ENCODE measurements at regions of chr1 and their contacts with region 1.

Region 1: GRCh38 chr1:182084487-182085316 is 23.2 kb upstream of the ZNF648 start:
- DNase-seq: peak; percentile 72 to 76 (median 74)
- H3K4me3 ChIP-seq: no peak overlapping the region
- H3K4me3 Mint-ChIP-seq: peak overlapping the region in 4 of 8 donors; percentile 13 to 58 (median 16)
- H3K27ac ChIP-seq: peak overlapping the region; percentile 21
- H3K27ac Mint-ChIP-seq: peak overlapping the region; percentile 59 to 90 (median 79)
- H3K4me1 ChIP-seq: peaks cover 51% of the 10 kb centered on the region
- H3K4me1 Mint-ChIP-seq: peaks cover 30 to 51% (median 46%) of the 10 kb centered on the region in 4 donors
- H3K27me3 ChIP-seq: no peaks in the 10 kb centered on the region
- H3K27me3 Mint-ChIP-seq: no peaks in the 10 kb centered on the region

Region 2: DNA sequence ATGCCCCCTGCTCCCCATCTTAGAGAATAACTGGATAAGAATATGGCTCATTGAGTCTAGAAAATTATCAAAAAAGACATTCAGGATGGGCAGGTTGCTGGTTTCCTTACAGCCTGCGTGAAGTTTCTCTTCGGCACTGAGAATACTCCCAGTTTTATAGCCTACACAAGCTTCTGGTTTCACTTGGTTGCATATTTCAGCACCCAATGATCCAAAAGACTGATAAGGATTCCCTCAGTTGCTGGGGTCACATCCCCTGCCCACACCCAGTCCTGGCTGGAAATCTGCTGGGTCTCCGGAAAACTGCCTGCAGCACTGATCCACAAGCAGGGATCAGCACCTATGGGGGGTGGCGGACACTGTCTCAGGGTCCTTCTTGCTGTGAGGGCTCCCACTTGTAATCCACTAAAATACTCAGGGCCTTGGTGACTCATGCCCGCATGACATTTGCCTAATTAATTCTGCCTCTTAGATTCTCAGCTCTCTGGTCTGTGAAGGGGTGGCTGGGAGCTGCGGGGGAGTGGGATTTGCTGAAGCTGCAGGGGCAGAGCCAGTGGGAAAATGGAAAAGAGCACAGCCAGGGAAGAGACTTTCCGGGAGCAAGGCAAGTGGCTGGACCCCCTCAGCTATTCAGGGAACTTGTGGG is 165.7 kb before region 1 on chr1:
- CTCF ChIA-PET with region 1: no interaction called
- POLR2A ChIA-PET with region 1: no interaction called
- intact Hi-C with region 1: no loop called
- DNase-seq: no peak
- H3K4me3 ChIP-seq: no peak overlapping the region
- H3K4me3 Mint-ChIP-seq: no peak overlapping the region
- H3K27ac ChIP-seq: no peak overlapping the region
- H3K27ac Mint-ChIP-seq: no peak overlapping the region
- H3K4me1 ChIP-seq: no peaks in the 10 kb centered on the region
- H3K4me1 Mint-ChIP-seq: no peaks in the 10 kb centered on the region
- H3K27me3 ChIP-seq: no peaks in the 10 kb centered on the region
- H3K27me3 Mint-ChIP-seq: peaks cover 4 to 14% of the 10 kb centered on the region in 2 donors

Region 3: GRCh38 chr1:182029379-182030331 is 55.0 kb before region 1 on chr1:
- CTCF ChIA-PET with region 1: interaction called, 4 read pairs
- POLR2A ChIA-PET with region 1: no interaction called
- intact Hi-C with region 1: loop called (anchors 5 kb)
- DNase-seq: peak; percentile 98
- H3K4me3 ChIP-seq: peak overlapping the region; percentile 92 to 94
- H3K4me3 Mint-ChIP-seq: peak overlapping the region; percentile 91 to 100 (median 96)
- H3K27ac ChIP-seq: peak overlapping the region; percentile 77
- H3K27ac Mint-ChIP-seq: peak overlapping the region; percentile 84 to 100 (median 99)
- H3K4me1 ChIP-seq: peaks cover 16% of the 10 kb centered on the region
- H3K4me1 Mint-ChIP-seq: peaks cover 14 to 21% (median 16%) of the 10 kb centered on the region in 4 donors
- H3K27me3 ChIP-seq: no peaks in the 10 kb centered on the region
- H3K27me3 Mint-ChIP-seq: no peaks in the 10 kb centered on the region

Region 4: DNA sequence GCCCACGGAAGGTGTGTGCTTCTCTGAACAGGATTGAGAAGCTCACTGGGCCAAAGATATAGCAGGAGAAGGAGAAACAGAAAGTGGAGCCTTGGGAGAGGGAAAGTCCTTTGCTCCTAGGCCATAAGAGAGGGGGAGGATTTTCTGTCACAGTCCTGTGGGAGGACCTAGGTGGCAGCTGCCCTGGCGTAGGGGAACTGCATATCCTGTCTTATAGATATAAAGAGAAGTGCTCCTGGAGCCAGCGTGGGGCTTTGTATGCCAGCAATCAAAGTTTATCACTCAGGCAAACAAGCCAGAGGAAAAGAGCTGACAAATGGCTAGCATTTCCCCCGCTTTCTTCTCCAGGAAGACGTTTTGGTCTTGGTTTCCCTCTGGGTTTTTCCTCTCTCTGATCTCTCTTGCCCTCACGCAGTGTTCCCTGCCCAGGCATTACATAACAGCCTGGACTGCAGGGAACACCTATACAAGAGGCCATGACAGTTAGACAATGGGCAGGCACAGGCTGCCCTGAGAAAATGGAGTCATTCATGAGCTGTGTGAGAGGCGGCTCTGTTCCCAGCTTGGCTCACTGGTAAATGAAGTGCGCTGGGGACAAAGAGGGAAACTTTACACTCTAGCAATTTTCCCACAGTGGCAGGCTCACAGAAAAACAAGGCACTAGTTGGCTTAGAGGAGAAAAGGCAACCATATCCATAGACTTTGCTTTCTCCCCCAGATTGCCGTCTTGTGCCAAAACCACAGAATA is 29.4 kb after region 1 on chr1:
- CTCF ChIA-PET with region 1: interaction called, 63 read pairs
- POLR2A ChIA-PET with region 1: interaction called, 3 read pairs
- intact Hi-C with region 1: no loop called
- DNase-seq: no peak
- H3K4me3 ChIP-seq: no peak overlapping the region
- H3K4me3 Mint-ChIP-seq: peak overlapping the region in 1 of 8 donors; percentile 43
- H3K27ac ChIP-seq: no peak overlapping the region
- H3K27ac Mint-ChIP-seq: no peak overlapping the region
- H3K4me1 ChIP-seq: no peaks in the 10 kb centered on the region
- H3K4me1 Mint-ChIP-seq: peaks cover 0 to 3% (median 1%) of the 10 kb centered on the region in 4 donors
- H3K27me3 ChIP-seq: no peaks in the 10 kb centered on the region
- H3K27me3 Mint-ChIP-seq: peaks cover 5 to 27% of the 10 kb centered on the region in 2 donors

Region 5: GRCh38 chr1:182198049-182198501 is 113.4 kb after region 1 on chr1:
- CTCF ChIA-PET with region 1: interaction called, 14 read pairs
- POLR2A ChIA-PET with region 1: interaction called, 3 read pairs
- intact Hi-C with region 1: no loop called
- DNase-seq: no peak
- H3K4me3 ChIP-seq: no peak overlapping the region
- H3K4me3 Mint-ChIP-seq: no peak overlapping the region
- H3K27ac ChIP-seq: no peak overlapping the region
- H3K27ac Mint-ChIP-seq: no peak overlapping the region
- H3K4me1 ChIP-seq: no peaks in the 10 kb centered on the region
- H3K4me1 Mint-ChIP-seq: no peaks in the 10 kb centered on the region
- H3K27me3 ChIP-seq: no peaks in the 10 kb centered on the region
- H3K27me3 Mint-ChIP-seq: peaks cover 6 to 9% of the 10 kb centered on the region in 2 donors

Region 6: DNA sequence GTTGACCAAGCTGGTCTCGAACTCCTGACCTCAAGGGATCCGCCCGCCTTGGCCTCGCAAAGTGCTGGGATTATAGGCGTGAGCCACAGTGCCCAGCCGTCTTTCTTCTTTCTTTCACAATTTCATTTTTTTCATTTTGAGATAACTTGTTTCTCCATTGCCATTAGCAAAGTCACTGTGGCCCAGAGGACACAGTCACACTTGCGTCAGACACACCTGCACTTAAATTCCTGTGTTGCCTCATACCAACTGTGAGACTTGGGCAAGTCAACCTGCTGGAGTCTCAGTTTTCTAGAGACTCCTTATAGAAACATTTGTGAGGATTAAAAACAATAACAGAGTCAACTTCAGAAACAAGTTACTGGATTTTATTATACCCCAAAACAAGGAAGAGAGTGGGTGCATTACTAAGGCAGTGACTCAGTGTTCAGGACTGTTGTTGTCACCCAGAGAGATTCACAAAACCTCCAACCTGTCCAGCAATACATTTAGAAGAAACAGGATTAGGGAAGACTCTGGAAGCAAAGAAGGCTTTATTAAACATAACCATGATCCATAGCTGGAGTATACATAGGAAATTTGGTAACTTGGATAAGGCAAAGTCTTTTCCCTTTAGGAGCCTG is 313.2 kb after region 1 on chr1:
- CTCF ChIA-PET with region 1: interaction called, 189 read pairs
- POLR2A ChIA-PET with region 1: interaction called, 37 read pairs
- intact Hi-C with region 1: loop called (anchors 1 kb)
- DNase-seq: no peak
- H3K4me3 ChIP-seq: no peak overlapping the region
- H3K4me3 Mint-ChIP-seq: no peak overlapping the region
- H3K27ac ChIP-seq: no peak overlapping the region
- H3K27ac Mint-ChIP-seq: peak overlapping the region in 2 of 7 donors; percentile 13 to 60
- H3K4me1 ChIP-seq: peaks cover 5% of the 10 kb centered on the region
- H3K4me1 Mint-ChIP-seq: peaks cover 5 to 12% (median 8%) of the 10 kb centered on the region in 4 donors
- H3K27me3 ChIP-seq: no peaks in the 10 kb centered on the region
- H3K27me3 Mint-ChIP-seq: no peaks in the 10 kb centered on the region

Region 7: GRCh38 chr1:182781841-182782586 is 697.3 kb after region 1 on chr1:
- CTCF ChIA-PET with region 1: interaction called, 7 read pairs
- POLR2A ChIA-PET with region 1: no interaction called
- intact Hi-C with region 1: loop called (anchors 1 kb)
- DNase-seq: peak; percentile 53 to 64 (median 59)
- H3K4me3 ChIP-seq: no peak overlapping the region
- H3K4me3 Mint-ChIP-seq: no peak overlapping the region
- H3K27ac ChIP-seq: no peak overlapping the region
- H3K27ac Mint-ChIP-seq: peak overlapping the region in 1 of 7 donors; percentile 40
- H3K4me1 ChIP-seq: no peaks in the 10 kb centered on the region
- H3K4me1 Mint-ChIP-seq: peaks cover 3 to 6% (median 4%) of the 10 kb centered on the region in 4 donors
- H3K27me3 ChIP-seq: no peaks in the 10 kb centered on the region
- H3K27me3 Mint-ChIP-seq: no peaks in the 10 kb centered on the region